ENCODE measurements at regions of chr4 and their contacts with region 1.

Region 1: GRCh38 chr4:176195184-176195978 is at the start of gene SPATA4:
- DNase-seq: peak; percentile 93 to 96 (median 95)
- H3K4me3 ChIP-seq: peak within 1 kb of the TSS in 3 of 4 donors; percentile 12 to 87 (median 54)
- H3K27ac ChIP-seq: peak within 1 kb of the TSS in 2 of 5 donors; percentile 8 to 39
- H3K4me1 ChIP-seq: peaks cover 0 to 4% of the 10 kb centered on the region in 2 donors
- H3K27me3 ChIP-seq: no peaks in the 10 kb centered on the region
- CTCF ChIP-seq: no peak
- POLR2A ChIP-seq: peak in 1 of 2 donors; percentile 23
- total RNA-seq, gene SPATA4: 0.33 to 0.83 (median 0.57) TPM in 4 of 9 donors, not detected in the others

Region 2: GRCh38 chr4:175263537-175263936 is 931.8 kb before region 1 on chr4:
- intact Hi-C with region 1: no loop called
- DNase-seq: no peak
- H3K4me3 ChIP-seq: no peak overlapping the region
- H3K27ac ChIP-seq: no peak overlapping the region
- H3K4me1 ChIP-seq: no peaks in the 10 kb centered on the region
- H3K27me3 ChIP-seq: no peaks in the 10 kb centered on the region
- CTCF ChIP-seq: no peak
- POLR2A ChIP-seq: no peak

Region 3: GRCh38 chr4:176137631-176138030 is 57.8 kb before region 1 on chr4:
- intact Hi-C with region 1: no loop called
- DNase-seq: no peak
- H3K4me3 ChIP-seq: no peak overlapping the region
- H3K27ac ChIP-seq: no peak overlapping the region
- H3K4me1 ChIP-seq: no peaks in the 10 kb centered on the region
- H3K27me3 ChIP-seq: no peaks in the 10 kb centered on the region
- CTCF ChIP-seq: no peak
- POLR2A ChIP-seq: no peak

Region 4: DNA sequence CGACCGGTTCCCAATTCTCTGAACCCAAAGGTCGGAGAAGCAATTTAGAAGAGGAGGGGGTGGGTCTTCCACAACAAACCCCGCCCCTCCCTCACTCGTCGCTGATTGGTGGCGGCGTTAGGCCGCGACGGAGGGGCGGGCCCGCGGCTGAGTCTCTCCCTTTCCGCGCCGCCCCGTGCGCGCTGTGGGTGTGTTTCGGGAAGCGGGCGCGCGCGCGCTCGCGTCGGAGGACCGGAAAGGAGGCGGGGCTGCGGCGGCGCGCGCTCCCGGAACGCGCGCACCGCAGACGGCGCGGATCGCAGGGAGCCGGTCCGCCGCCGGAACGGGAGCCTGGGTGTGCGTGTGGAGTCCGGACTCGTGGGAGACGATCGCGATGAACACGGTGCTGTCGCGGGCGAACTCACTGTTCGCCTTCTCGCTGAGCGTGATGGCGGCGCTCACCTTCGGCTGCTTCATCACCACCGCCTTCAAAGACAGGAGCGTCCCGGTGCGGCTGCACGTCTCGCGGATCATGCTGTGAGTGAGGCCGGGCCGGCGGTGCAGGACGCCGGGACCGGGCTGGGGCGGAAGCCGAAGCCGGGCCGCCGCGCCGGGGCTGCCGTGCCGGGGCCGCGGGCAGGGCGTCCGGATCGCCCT is 124.4 kb after region 1 on chr4 and contains the start of gene SPCS3:
- intact Hi-C with region 1: loop called in 1 of 2 experiments (anchors 10 kb)
- DNase-seq: peak; percentile 95 to 98 (median 97)
- H3K4me3 ChIP-seq: peak within 1 kb of the TSS; percentile 49 to 92 (median 82)
- H3K27ac ChIP-seq: peak within 1 kb of the TSS; percentile 85 to 98 (median 96)
- H3K4me1 ChIP-seq: peaks cover 0 to 34% of the 10 kb centered on the region in 2 donors
- H3K27me3 ChIP-seq: no peaks in the 10 kb centered on the region
- CTCF ChIP-seq: no peak
- POLR2A ChIP-seq: peak; percentile 82 to 88
- total RNA-seq, gene SPCS3: 23.0 to 144 (median 49.5) TPM